Activated B cell treated with CpG ODN at 0.5 μM for 24 hours (primary cell): ENCODE measurements at regions of chr14 and their contacts with region 1.

Region 1: GRCh38 chr14:65412032-65412846 is at the start of gene FUT8:
- DNase-seq: peak; percentile 93
- ATAC-seq: peak; percentile 88
- H3K4me3 Mint-ChIP-seq: peak within 1 kb of the TSS; percentile 99
- H3K27ac Mint-ChIP-seq: peak within 1 kb of the TSS; percentile 99
- H3K4me1 Mint-ChIP-seq: peaks cover 42% of the 10 kb centered on the region
- H3K27me3 Mint-ChIP-seq: no peaks in the 10 kb centered on the region
- CTCF ChIP-seq: no peak
- total RNA-seq, gene FUT8: 115 and 123 TPM in 2 replicates

Region 2: GRCh38 chr14:65134667-65135579 is 277.3 kb before region 1 on chr14:
- CTCF ChIA-PET with region 1: no interaction called
- POLR2A ChIA-PET with region 1: no interaction called
- intact Hi-C with region 1: no loop called
- DNase-seq: no peak
- ATAC-seq: no peak
- H3K4me3 Mint-ChIP-seq: no peak overlapping the region
- H3K27ac Mint-ChIP-seq: no peak overlapping the region
- H3K4me1 Mint-ChIP-seq: no peaks in the 10 kb centered on the region
- H3K27me3 Mint-ChIP-seq: no peaks in the 10 kb centered on the region
- CTCF ChIP-seq: no peak

Region 3: DNA sequence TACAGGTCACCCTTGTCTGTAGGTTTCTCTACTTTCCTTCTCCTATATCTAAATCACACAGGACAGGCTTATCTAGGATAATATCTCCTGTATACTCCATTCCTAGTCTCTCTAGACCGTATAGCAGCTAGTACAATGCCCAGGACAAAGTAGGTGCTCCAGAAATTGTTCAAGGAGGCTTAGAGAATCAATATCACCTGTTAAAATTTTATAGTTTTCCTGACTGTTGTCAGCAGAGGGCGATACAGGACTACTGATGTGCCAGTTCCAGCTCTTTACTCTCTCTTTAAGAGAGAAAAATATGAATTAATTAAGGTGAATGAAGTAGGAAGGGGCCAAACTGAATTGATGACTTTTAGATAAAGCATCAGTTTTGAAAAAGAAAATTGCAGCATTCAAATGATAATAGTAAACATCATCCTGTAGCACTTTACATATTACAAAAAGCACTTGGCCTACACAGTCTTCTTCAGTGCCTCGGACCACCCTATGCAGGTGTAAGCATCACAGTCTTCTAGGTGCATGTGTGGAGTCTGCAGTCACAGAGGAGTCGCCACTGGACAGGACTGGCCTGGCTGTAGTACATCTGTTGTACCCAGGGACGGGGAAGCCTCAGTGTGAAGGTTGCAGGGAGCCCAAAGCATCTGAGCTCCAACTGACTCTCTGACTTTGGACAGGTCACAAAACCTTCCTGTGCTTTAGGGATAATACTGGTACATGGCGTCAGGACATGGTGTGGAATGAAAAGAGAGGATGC is 248.0 kb before region 1 on chr14:
- CTCF ChIA-PET with region 1: interaction called, 65 read pairs
- POLR2A ChIA-PET with region 1: interaction called, 59 read pairs
- intact Hi-C with region 1: loop called (anchors 1 kb)
- DNase-seq: no peak
- ATAC-seq: peak; percentile 33
- H3K4me3 Mint-ChIP-seq: no peak overlapping the region
- H3K27ac Mint-ChIP-seq: peak overlapping the region; percentile 56
- H3K4me1 Mint-ChIP-seq: peaks cover 53% of the 10 kb centered on the region
- H3K27me3 Mint-ChIP-seq: no peaks in the 10 kb centered on the region
- CTCF ChIP-seq: peak; percentile 29

Region 4: DNA sequence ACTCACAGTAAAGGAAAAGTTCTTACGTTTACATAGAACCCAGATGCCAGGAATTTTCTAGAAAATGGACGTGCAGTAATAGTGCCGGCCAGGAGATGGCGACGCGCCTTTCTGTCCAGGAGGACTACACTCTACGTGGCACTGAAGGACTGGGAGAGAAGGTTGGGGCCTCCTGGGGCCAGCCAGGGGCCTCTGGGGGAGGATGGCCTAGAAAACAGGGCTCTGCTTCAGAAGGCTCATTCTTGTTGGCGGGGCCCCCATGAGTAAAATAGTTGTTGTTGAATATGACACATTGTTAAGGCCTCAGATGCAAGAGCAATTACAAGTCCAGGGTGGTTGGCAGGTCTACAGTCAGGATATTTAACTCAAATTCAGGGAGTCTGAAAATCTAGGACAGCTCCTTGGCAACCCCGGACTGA is 189.8 kb before region 1 on chr14:
- CTCF ChIA-PET with region 1: interaction called, 46 read pairs
- POLR2A ChIA-PET with region 1: interaction called, 65 read pairs
- intact Hi-C with region 1: loop called (anchors 1 kb)
- DNase-seq: no peak
- ATAC-seq: peak; percentile 91
- H3K4me3 Mint-ChIP-seq: peak overlapping the region; percentile 11
- H3K27ac Mint-ChIP-seq: peak overlapping the region; percentile 18
- H3K4me1 Mint-ChIP-seq: peaks cover 62% of the 10 kb centered on the region
- H3K27me3 Mint-ChIP-seq: no peaks in the 10 kb centered on the region
- CTCF ChIP-seq: peak; percentile 58

Region 5: GRCh38 chr14:65302571-65303189 is 109.6 kb before region 1 on chr14:
- CTCF ChIA-PET with region 1: interaction called, 5 read pairs
- POLR2A ChIA-PET with region 1: interaction called, 158 read pairs
- intact Hi-C with region 1: loop called (anchors 1 kb)
- DNase-seq: no peak
- ATAC-seq: peak; percentile 40
- H3K4me3 Mint-ChIP-seq: peak overlapping the region; percentile 48
- H3K27ac Mint-ChIP-seq: peak overlapping the region; percentile 96
- H3K4me1 Mint-ChIP-seq: peaks cover 79% of the 10 kb centered on the region
- H3K27me3 Mint-ChIP-seq: no peaks in the 10 kb centered on the region
- CTCF ChIP-seq: no peak

Region 6: DNA sequence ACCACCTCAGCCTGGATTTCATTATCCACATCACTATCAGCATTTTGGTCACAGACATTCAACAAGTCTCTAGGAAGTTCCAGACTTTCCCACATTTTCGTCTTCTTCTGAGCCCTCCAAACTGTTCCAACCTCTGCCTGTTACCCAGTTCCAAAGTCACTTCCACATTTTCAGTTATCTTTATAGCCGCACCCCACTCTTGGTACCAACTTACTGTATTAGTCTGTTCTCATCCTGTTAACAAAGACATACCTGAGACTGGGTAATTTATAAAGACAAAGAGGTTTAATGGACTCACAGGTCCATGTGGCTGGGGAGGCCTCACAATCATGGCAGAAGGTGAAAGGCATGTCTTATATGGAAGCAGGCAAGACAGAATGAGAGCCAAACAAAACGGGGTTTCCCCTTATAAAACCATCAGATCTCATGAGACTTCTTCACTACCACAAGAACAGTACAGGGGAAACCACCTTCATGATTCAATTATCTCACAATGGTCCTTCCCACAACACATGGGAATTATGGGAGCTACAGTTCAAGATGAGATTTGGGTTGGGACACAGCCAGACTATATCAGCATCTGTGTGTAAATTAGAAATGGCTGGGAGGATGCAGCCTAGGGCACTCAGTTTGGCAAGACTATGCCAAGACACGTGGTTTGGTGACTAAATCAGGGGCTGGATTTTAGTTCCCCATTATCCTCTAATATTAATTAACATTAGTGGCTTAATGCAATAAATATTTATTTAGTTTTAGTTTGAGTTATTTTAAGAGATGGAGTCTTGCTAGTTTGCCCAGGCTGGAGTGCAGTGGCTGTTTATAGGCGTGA is 15.9 kb before region 1 on chr14:
- CTCF ChIA-PET with region 1: interaction called, 3 read pairs
- POLR2A ChIA-PET with region 1: interaction called, 12 read pairs
- intact Hi-C with region 1: loop called (anchors 1 kb)
- DNase-seq: no peak
- ATAC-seq: peak; percentile 79
- H3K4me3 Mint-ChIP-seq: peak overlapping the region; percentile 58
- H3K27ac Mint-ChIP-seq: peak overlapping the region; percentile 82
- H3K4me1 Mint-ChIP-seq: peaks cover 32% of the 10 kb centered on the region
- H3K27me3 Mint-ChIP-seq: no peaks in the 10 kb centered on the region
- CTCF ChIP-seq: no peak

Region 7: DNA sequence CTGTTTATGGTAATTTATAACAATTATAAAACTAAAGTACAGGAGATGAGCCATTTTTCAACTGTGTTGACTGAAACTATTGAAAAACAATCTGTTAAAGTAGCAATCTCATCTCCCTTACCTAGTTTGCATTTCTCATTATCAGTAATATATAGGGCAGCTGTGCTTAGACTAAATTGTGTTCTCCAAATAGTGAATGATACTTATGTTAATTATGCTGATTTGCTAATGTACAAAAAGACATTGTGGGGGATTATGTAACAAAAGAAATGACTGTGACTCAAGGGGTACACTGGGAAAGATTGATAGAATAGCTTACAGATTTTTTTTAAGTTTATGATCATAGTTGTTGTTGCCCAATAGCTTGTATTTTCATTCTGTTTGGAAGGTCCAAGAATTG is 208.0 kb after region 1 on chr14:
- CTCF ChIA-PET with region 1: no interaction called
- POLR2A ChIA-PET with region 1: no interaction called
- intact Hi-C with region 1: no loop called
- DNase-seq: no peak
- ATAC-seq: no peak
- H3K4me3 Mint-ChIP-seq: no peak overlapping the region
- H3K27ac Mint-ChIP-seq: no peak overlapping the region
- H3K4me1 Mint-ChIP-seq: no peaks in the 10 kb centered on the region
- H3K27me3 Mint-ChIP-seq: no peaks in the 10 kb centered on the region
- CTCF ChIP-seq: no peak

Region 8: DNA sequence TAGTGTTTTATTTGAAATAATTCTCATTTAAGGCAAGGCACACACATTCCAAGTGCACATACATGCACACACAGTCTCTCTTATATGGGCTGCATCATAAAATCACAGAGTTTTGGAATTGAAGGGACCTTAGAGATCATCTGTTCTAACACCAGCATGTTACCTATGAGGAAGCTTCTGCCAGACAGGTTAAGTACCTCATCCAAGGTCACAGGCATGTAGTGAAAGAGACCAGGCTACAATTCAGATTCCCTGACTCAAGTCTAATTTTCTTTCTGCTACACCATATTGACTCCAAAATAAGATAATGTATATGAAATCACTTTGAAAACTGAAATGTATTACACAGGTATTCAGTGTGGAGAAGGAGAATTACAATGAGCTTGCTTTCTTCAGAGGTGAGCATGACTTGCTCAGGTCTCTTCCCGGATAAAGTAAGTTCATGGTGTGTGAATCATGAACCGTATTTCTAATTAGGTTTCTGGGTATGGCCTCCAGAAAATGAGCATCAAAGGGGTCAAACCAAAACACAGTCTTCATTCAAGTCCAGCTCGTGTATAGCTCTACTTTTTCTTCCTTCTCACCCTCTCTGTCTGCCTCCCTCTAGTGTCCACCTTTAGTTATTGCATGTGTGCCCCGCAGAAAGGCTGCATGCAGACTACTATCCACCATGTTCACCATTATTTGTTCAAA is 412.2 kb after region 1 on chr14:
- CTCF ChIA-PET with region 1: interaction called, 214 read pairs
- POLR2A ChIA-PET with region 1: interaction called, 12 read pairs
- intact Hi-C with region 1: loop called (anchors 1 kb)
- DNase-seq: no peak
- ATAC-seq: peak; percentile 99
- H3K4me3 Mint-ChIP-seq: no peak overlapping the region
- H3K27ac Mint-ChIP-seq: no peak overlapping the region
- H3K4me1 Mint-ChIP-seq: peaks cover 1% of the 10 kb centered on the region
- H3K27me3 Mint-ChIP-seq: peaks cover 5% of the 10 kb centered on the region
- CTCF ChIP-seq: peak; percentile 82

Region 9: GRCh38 chr14:67240978-67241414 is 1828.8 kb after region 1 on chr14:
- CTCF ChIA-PET with region 1: no interaction called
- POLR2A ChIA-PET with region 1: no interaction called
- intact Hi-C with region 1: loop called (anchors 5 kb)
- DNase-seq: peak; percentile 91
- ATAC-seq: peak; percentile 94
- H3K4me3 Mint-ChIP-seq: peak overlapping the region; percentile 93
- H3K27ac Mint-ChIP-seq: peak overlapping the region; percentile 81
- H3K4me1 Mint-ChIP-seq: peaks cover 16% of the 10 kb centered on the region
- H3K27me3 Mint-ChIP-seq: no peaks in the 10 kb centered on the region
- CTCF ChIP-seq: no peak